Right lobe of liver (tissue), 6 donors: ENCODE measurements at regions of chr14 and their contacts with region 1.

Region 1: GRCh38 chr14:20682435-20683124 is 1.8 kb upstream of the RNASE4 start:
- DNase-seq: peak; percentile 88 to 92 (median 90)
- ATAC-seq: peak; percentile 64 to 81 (median 67)
- H3K4me3 ChIP-seq: peak overlapping the region; percentile 71 to 80 (median 71)
- H3K27ac ChIP-seq: peak overlapping the region; percentile 96 to 100 (median 99)
- H3K4me1 ChIP-seq: peaks cover 0 to 21% (median 6%) of the 10 kb centered on the region in 4 donors
- H3K27me3 ChIP-seq: no peaks in the 10 kb centered on the region
- CTCF ChIP-seq: peak in 3 of 4 donors; percentile 18 to 21 (median 20)
- POLR2A ChIP-seq: peak; percentile 96

Region 2: GRCh38 chr14:19941668-19942067 is 740.9 kb before region 1 on chr14:
- intact Hi-C with region 1: no loop called
- DNase-seq: no peak
- ATAC-seq: peak in 2 of 4 donors; percentile 23 to 34
- H3K4me3 ChIP-seq: no peak overlapping the region
- H3K27ac ChIP-seq: no peak overlapping the region
- H3K4me1 ChIP-seq: no peaks in the 10 kb centered on the region
- H3K27me3 ChIP-seq: no peaks in the 10 kb centered on the region
- CTCF ChIP-seq: no peak
- POLR2A ChIP-seq: no peak

Region 3: DNA sequence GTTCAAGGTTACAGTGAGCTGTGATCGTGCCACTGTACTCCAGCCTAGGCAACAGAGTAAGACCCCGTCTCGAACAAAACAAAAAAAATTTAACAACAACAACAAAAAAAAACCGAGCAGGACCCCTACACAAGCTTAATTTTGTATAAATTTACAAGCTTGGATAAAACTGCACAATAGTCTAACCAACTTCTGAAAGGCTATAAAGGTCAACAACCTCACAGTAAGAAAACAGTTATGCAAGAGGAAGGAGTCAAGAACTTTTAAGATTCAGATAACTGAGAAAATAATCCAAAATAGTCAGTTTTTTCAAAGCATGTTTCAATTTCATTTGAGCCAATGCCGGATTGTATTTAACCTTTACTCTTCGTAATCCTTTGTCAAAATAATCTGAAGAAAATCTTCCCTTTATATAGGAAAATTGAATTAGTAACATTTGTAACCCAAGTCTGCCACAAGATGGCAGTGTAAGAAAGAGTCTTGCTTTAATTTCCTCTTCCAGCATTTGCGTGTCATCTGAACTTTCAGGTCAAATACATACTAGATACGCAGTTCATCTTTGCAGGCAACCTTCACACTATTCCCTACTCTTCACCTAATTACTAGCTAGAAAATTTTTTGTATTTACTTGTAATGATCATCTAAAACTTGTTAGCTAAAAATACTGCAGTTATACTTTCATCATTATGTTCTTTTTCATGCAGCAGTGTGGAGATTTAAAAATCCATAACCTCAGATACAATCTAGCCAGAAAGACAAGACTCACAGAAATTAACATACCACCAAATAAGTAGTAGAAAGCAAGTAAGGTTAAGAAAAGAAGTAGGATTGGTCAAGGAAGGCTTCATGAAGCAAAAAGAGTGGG is 355.3 kb before region 1 on chr14:
- intact Hi-C with region 1: loop called in 1 of 2 experiments (anchors 10 kb)
- DNase-seq: no peak
- ATAC-seq: peak; percentile 78 to 86 (median 80)
- H3K4me3 ChIP-seq: no peak overlapping the region
- H3K27ac ChIP-seq: peak overlapping the region in 2 of 3 donors; percentile 7 to 94
- H3K4me1 ChIP-seq: peaks cover 0 to 44% (median 14%) of the 10 kb centered on the region in 4 donors
- H3K27me3 ChIP-seq: no peaks in the 10 kb centered on the region
- CTCF ChIP-seq: peak; percentile 77 to 84 (median 78)
- POLR2A ChIP-seq: no peak

Region 4: GRCh38 chr14:20714593-20715250 is 32.1 kb after region 1 on chr14:
- intact Hi-C with region 1: no loop called
- DNase-seq: peak in 2 of 3 donors; percentile 55 to 60
- ATAC-seq: peak; percentile 59 to 70 (median 64)
- H3K4me3 ChIP-seq: no peak overlapping the region
- H3K27ac ChIP-seq: peak overlapping the region in 1 of 3 donors; percentile 18
- H3K4me1 ChIP-seq: no peaks in the 10 kb centered on the region
- H3K27me3 ChIP-seq: no peaks in the 10 kb centered on the region
- CTCF ChIP-seq: no peak
- POLR2A ChIP-seq: no peak

Region 5: DNA sequence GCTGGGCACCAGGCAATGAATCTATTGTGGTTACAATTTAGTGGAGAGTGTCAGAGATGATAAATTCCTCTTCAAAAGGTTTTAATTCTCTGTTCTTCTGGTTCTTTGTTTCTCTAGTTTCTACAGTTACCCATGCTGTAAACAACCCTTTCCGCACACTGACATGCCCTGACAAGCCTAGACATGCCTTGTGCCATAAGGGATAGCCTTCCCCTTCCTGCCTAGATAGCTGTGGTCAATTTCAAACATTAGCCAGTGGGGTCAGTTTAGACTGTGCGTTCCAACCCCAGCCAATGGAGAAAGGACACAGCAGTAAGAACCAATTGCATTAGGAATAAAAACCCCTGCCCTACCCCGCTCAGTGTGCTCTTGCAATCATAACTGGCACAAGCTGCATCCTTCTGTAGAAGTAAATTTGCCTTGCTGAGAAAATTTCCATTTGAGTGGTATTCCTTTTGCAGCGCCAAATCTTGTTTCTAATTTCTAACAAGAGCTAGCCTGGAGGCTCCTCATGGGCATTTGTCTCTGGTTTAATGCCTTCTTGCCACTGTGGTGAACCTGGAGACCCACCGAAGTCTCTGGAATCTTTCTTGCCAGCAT is 69.5 kb after region 1 on chr14:
- intact Hi-C with region 1: no loop called
- DNase-seq: no peak
- ATAC-seq: no peak
- H3K4me3 ChIP-seq: no peak overlapping the region
- H3K27ac ChIP-seq: no peak overlapping the region
- H3K4me1 ChIP-seq: peaks cover 0 to 5% (median 0%) of the 10 kb centered on the region in 4 donors
- H3K27me3 ChIP-seq: no peaks in the 10 kb centered on the region
- CTCF ChIP-seq: no peak
- POLR2A ChIP-seq: no peak